Naive thymus-derived CD4-positive, alpha-beta T cell (primary cell): ENCODE measurements at regions of chr2 and their contacts with region 1.

Region 1: DNA sequence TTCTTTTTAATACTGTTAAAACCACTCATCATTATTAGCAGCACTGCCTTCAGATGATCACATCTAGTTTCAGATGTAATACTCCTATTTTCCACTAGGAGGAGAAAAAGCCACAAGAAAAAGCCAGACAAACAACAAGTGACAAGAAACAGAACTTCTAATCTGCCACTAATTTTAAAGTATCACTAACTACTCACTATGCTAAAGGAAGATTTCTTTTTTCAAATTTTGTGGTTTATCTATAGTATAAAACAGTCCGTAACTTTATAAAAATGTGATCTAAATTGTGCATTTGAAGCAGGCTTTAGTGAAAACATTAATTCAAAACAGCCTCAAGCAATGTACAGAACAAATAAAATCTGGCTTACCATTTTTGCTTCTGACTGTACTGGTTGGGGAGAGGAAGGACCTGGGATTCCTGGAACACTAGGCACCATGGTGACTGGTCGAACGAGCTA is 56.8 kb downstream of the ATF2 start:
- DNase-seq: peak in 6 of 9 donors; percentile 23 to 59 (median 48)
- ATAC-seq: peak; percentile 67
- H3K4me3 ChIP-seq: no peak overlapping the region
- H3K4me3 Mint-ChIP-seq: no peak overlapping the region
- H3K27ac ChIP-seq: no peak overlapping the region
- H3K27ac Mint-ChIP-seq: peak overlapping the region in 7 of 9 donors; percentile 7 to 74 (median 39)
- H3K4me1 ChIP-seq: no peaks in the 10 kb centered on the region
- H3K4me1 Mint-ChIP-seq: peaks cover 0 to 9% (median 4%) of the 10 kb centered on the region in 7 donors
- H3K27me3 ChIP-seq: no peaks in the 10 kb centered on the region
- H3K27me3 Mint-ChIP-seq: no peaks in the 10 kb centered on the region

Region 2: DNA sequence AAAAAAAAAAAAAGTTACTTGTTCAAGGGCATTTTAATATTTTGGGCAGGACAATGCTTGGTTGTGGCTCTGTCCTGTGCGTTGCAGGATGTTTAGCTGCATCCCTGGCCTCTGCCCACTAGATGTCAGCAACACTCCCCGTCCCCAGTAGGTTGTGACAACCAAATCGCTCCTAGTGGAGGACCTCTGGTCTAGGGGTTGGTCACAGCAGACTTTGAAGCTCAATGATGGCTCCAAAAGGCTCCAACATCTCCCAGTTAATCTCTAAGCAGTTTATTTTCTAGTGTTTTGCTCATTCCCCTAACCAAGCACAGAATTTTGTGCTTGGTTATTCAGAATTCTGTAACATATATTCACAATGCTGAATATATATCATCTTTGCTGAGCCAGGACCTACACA is 414.0 kb before region 1 on chr2:
- CTCF ChIA-PET with region 1: interaction called, 3 read pairs
- POLR2A ChIA-PET with region 1: no interaction called
- intact Hi-C with region 1: loop called (anchors 1 to 5 kb)
- DNase-seq: peak in 8 of 9 donors; percentile 38 to 60 (median 49)
- ATAC-seq: peak; percentile 93
- H3K4me3 ChIP-seq: no peak overlapping the region
- H3K4me3 Mint-ChIP-seq: no peak overlapping the region
- H3K27ac ChIP-seq: no peak overlapping the region
- H3K27ac Mint-ChIP-seq: peak overlapping the region in 1 of 9 donors; percentile 55
- H3K4me1 ChIP-seq: no peaks in the 10 kb centered on the region
- H3K4me1 Mint-ChIP-seq: peaks cover 0 to 7% (median 0%) of the 10 kb centered on the region in 7 donors
- H3K27me3 ChIP-seq: no peaks in the 10 kb centered on the region
- H3K27me3 Mint-ChIP-seq: peaks cover 0 to 40% (median 0%) of the 10 kb centered on the region in 5 donors

Region 3: GRCh38 chr2:175181104-175181876 is 70.1 kb after region 1 on chr2 and contains the start of gene ATP5MC3:
- CTCF ChIA-PET with region 1: no interaction called
- POLR2A ChIA-PET with region 1: interaction called, 3 read pairs
- intact Hi-C with region 1: loop called in 1 of 2 experiments (anchors 2 kb)
- DNase-seq: peak; percentile 83 to 92 (median 89)
- ATAC-seq: peak; percentile 93
- H3K4me3 ChIP-seq: peak within 1 kb of the TSS; percentile 84
- H3K4me3 Mint-ChIP-seq: peak within 1 kb of the TSS; percentile 77 to 96 (median 88)
- H3K27ac ChIP-seq: peak within 1 kb of the TSS; percentile 89
- H3K27ac Mint-ChIP-seq: peak within 1 kb of the TSS; percentile 86 to 99 (median 93)
- H3K4me1 ChIP-seq: peaks cover 6 to 13% of the 10 kb centered on the region in 2 donors
- H3K4me1 Mint-ChIP-seq: peaks cover 14 to 39% (median 32%) of the 10 kb centered on the region in 7 donors
- H3K27me3 ChIP-seq: no peaks in the 10 kb centered on the region
- H3K27me3 Mint-ChIP-seq: no peaks in the 10 kb centered on the region
- total RNA-seq, gene ATP5MC3: 70.3 to 220 (median 77.6) TPM

Region 4: DNA sequence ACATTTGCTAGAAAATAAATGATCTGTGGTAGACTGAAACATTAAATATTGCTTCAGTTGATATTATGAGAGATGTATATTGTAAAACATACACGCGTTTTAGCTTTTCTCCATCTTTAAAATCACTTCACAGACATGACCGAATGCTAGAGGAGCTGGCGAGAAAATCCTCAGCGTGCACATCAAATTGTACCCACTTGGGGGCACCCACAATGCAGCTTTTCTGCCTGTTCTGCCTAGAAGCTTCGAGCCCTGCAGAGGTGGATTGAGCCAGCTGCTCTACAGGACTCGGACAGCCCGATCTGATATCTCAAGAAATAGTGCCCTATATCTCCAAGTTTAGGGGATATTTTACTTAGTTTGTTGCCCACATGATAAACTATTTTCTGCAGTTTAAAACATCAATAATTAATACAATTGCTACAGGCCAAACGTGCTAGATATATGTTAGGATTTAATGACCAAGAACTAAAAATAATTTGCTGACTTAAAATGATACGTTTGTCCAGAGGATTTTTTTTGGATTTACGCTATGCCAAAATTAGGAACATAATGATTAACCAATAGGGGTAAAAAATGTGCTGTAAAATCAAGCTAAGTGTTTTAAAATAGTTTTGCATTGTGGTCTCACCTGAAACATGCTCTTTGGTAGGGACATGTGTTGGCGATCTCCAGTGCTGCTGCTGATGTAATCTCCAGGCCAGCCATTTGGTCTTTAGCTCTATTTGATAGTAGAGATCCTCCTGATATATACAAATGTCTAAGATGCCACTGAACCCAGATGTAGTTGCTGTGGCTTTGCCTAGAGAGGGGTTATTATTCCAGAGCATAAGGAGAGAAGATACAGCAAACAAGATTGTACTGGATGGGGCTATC is 92.6 kb after region 1 on chr2:
- CTCF ChIA-PET with region 1: no interaction called
- POLR2A ChIA-PET with region 1: no interaction called
- intact Hi-C with region 1: loop called in 1 of 2 experiments (anchors 5 kb)
- DNase-seq: peak; percentile 9 to 61 (median 28)
- ATAC-seq: peak; percentile 85
- H3K4me3 ChIP-seq: no peak overlapping the region
- H3K4me3 Mint-ChIP-seq: peak overlapping the region in 1 of 10 donors; percentile 37
- H3K27ac ChIP-seq: no peak overlapping the region
- H3K27ac Mint-ChIP-seq: no peak overlapping the region
- H3K4me1 ChIP-seq: no peaks in the 10 kb centered on the region
- H3K4me1 Mint-ChIP-seq: peaks cover 0 to 6% (median 4%) of the 10 kb centered on the region in 7 donors
- H3K27me3 ChIP-seq: no peaks in the 10 kb centered on the region
- H3K27me3 Mint-ChIP-seq: peaks cover 6 to 35% (median 23%) of the 10 kb centered on the region in 5 donors

Region 5: GRCh38 chr2:175282290-175282689 is 171.1 kb after region 1 on chr2:
- CTCF ChIA-PET with region 1: interaction called, 3 read pairs
- POLR2A ChIA-PET with region 1: no interaction called
- intact Hi-C with region 1: loop called (anchors 1 kb)
- DNase-seq: peak in 5 of 9 donors; percentile 4 to 16 (median 7)
- ATAC-seq: peak; percentile 61
- H3K4me3 ChIP-seq: no peak overlapping the region
- H3K4me3 Mint-ChIP-seq: no peak overlapping the region
- H3K27ac ChIP-seq: no peak overlapping the region
- H3K27ac Mint-ChIP-seq: no peak overlapping the region
- H3K4me1 ChIP-seq: no peaks in the 10 kb centered on the region
- H3K4me1 Mint-ChIP-seq: no peaks in the 10 kb centered on the region
- H3K27me3 ChIP-seq: no peaks in the 10 kb centered on the region
- H3K27me3 Mint-ChIP-seq: peaks cover 0 to 15% (median 3%) of the 10 kb centered on the region in 5 donors

Region 6: GRCh38 chr2:176018708-176019107 is 907.5 kb after region 1 on chr2:
- CTCF ChIA-PET with region 1: no interaction called
- POLR2A ChIA-PET with region 1: no interaction called
- intact Hi-C with region 1: no loop called
- DNase-seq: no peak
- ATAC-seq: no peak
- H3K4me3 ChIP-seq: no peak overlapping the region
- H3K4me3 Mint-ChIP-seq: no peak overlapping the region
- H3K27ac ChIP-seq: no peak overlapping the region
- H3K27ac Mint-ChIP-seq: no peak overlapping the region
- H3K4me1 ChIP-seq: no peaks in the 10 kb centered on the region
- H3K4me1 Mint-ChIP-seq: no peaks in the 10 kb centered on the region
- H3K27me3 ChIP-seq: no peaks in the 10 kb centered on the region
- H3K27me3 Mint-ChIP-seq: peaks cover 7 to 55% (median 37%) of the 10 kb centered on the region in 5 donors